Esophagus muscularis mucosa (tissue), 4 donors: ENCODE measurements at regions of chr6 and their contacts with region 1.

Region 1: GRCh38 chr6:26270903-26271667 is 93.9 kb upstream of the BTN3A2 start:
- DNase-seq: peak; percentile 94
- H3K4me3 ChIP-seq: peak overlapping the region; percentile 51 to 61 (median 54)
- H3K27ac ChIP-seq: peak overlapping the region; percentile 83 to 91 (median 88)
- H3K4me1 ChIP-seq: peaks cover 16 to 32% (median 26%) of the 10 kb centered on the region in 4 donors
- H3K27me3 ChIP-seq: peaks cover 0 to 65% (median 30%) of the 10 kb centered on the region in 4 donors
- CTCF ChIP-seq: no peak
- EP300 ChIP-seq: no peak
- POLR2A ChIP-seq: no peak

Region 2: GRCh38 chr6:26224884-26225638 is 46.0 kb before region 1 on chr6:
- intact Hi-C with region 1: loop called (anchors 5 kb)
- DNase-seq: no peak
- H3K4me3 ChIP-seq: peak overlapping the region; percentile 52 to 60 (median 55)
- H3K27ac ChIP-seq: peak overlapping the region; percentile 79 to 86 (median 82)
- H3K4me1 ChIP-seq: peaks cover 0 to 5% (median 4%) of the 10 kb centered on the region in 4 donors
- H3K27me3 ChIP-seq: peaks cover 0 to 22% (median 0%) of the 10 kb centered on the region in 4 donors
- CTCF ChIP-seq: no peak
- EP300 ChIP-seq: no peak
- POLR2A ChIP-seq: no peak

Region 3: GRCh38 chr6:26327450-26328264 is 56.6 kb after region 1 on chr6:
- intact Hi-C with region 1: loop called (anchors 5 kb)
- DNase-seq: no peak
- H3K4me3 ChIP-seq: no peak overlapping the region
- H3K27ac ChIP-seq: no peak overlapping the region
- H3K4me1 ChIP-seq: peaks cover 0 to 10% (median 3%) of the 10 kb centered on the region in 4 donors
- H3K27me3 ChIP-seq: peaks cover 0 to 90% (median 51%) of the 10 kb centered on the region in 4 donors
- CTCF ChIP-seq: no peak
- EP300 ChIP-seq: no peak
- POLR2A ChIP-seq: no peak